Activated CD4-positive, alpha-beta T cell treated with anti-CD3 and anti-CD28 coated beads for 36 hours (primary cell): ENCODE measurements at regions of chr5 and their contacts with region 1.

Region 1: DNA sequence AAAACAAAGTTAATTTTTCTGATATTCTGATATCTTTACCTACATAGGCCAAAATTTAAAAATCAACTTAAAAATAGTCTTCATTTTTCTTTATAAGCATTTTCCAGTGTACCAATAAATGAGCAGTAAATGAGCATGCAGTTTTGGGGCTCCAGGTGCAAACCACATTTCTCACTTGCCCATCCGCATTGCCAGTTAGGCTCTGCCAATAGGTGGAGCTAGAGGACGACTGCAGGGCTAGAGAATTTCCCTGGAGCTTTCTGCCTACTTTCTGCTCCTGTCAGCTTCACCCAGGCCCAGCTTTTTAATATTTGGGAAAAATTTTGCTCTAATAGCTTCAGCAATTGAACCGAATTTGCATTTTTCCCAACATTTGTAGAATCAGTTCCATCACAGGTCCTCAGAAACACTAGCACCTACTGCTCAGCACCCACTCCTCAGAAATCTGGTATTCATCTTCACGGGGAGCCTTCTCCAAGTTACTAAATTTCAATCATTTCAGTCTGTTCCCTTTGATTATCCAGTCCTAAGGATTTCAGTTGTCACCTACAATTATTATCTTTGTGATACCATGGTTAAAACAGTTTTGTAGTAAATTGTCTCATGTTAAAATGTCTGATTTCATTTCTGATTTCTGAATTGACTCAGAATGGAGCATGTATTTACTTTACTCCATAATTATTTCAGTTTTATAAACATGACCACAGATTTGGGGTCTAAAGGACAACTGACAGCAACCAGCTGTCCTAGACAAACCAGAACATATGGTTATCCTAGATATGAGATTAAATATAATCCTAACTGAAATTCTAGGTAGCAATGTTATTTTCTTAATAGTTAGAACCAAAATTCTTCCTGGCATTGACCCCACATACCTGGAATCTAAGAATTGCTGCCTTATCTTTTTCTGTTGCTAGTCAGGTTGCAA is 104.6 kb upstream of the FAM174A start:
- DNase-seq: peak; percentile 65
- ATAC-seq: peak; percentile 39
- H3K4me3 Mint-ChIP-seq: no peak overlapping the region
- H3K27ac Mint-ChIP-seq: no peak overlapping the region
- H3K4me1 Mint-ChIP-seq: no peaks in the 10 kb centered on the region
- H3K27me3 Mint-ChIP-seq: no peaks in the 10 kb centered on the region

Region 2: DNA sequence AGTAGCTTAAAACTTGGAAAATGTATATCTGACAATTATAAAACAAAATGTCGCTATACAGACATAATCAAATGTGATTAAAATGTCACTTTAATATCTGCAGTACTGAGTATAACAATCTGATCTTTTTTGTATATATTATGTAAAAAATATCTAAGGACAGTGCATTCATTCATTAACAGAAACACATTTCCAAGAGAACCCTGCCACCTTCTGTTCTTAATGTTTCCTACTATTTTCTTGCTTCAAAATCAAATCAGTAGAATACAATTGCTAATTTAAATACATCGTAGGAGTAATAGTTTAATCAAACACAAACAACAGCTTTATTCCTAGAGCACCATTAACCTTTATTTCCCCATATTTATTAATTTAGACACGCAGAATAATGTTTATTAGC is 615.2 kb after region 1 on chr5:
- CTCF ChIA-PET with region 1: no interaction called
- POLR2A ChIA-PET with region 1: no interaction called
- intact Hi-C with region 1: loop called in 1 of 2 experiments (anchors 2 kb)
- DNase-seq: no peak
- ATAC-seq: no peak
- H3K4me3 Mint-ChIP-seq: no peak overlapping the region
- H3K27ac Mint-ChIP-seq: no peak overlapping the region
- H3K4me1 Mint-ChIP-seq: peaks cover 9% of the 10 kb centered on the region
- H3K27me3 Mint-ChIP-seq: no peaks in the 10 kb centered on the region

Region 3: DNA sequence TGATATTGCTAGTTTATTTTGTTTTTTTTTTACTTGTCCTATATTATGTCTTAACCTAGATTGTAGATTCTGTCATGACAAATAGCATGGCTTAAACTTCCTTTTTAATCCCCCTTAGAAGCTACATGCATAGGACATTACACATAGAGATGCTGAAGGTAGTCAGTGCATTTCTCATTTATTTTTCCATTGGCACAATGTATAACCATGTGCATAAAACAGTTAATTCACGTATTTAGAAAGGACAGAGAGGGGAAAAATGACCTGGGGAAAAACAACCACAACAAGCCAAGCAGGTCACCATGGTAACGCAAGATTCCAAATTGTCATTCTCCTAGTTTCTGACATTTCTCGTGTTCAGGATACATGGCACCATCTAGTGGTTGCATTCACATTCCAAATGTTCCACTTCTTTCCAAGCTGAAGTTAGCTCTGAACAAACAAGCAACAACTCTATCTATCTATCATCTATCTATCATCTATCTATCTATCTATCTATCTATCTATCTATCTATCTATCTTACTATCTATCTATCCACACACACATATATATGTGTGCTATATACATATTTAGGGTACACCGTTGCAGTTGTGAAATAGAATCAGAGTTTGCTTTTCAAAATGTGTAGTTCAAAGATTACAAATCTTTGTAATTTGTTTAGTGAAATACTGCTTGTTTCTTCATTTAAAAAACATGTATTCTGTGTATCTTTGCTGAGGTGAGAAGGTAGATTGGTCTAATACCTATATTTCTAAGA is 959.8 kb after region 1 on chr5:
- CTCF ChIA-PET with region 1: interaction called, 5 read pairs
- POLR2A ChIA-PET with region 1: no interaction called
- intact Hi-C with region 1: loop called (anchors 1 to 2 kb)
- DNase-seq: peak; percentile 8
- ATAC-seq: no peak
- H3K4me3 Mint-ChIP-seq: no peak overlapping the region
- H3K27ac Mint-ChIP-seq: no peak overlapping the region
- H3K4me1 Mint-ChIP-seq: no peaks in the 10 kb centered on the region
- H3K27me3 Mint-ChIP-seq: peaks cover 4% of the 10 kb centered on the region

Region 4: DNA sequence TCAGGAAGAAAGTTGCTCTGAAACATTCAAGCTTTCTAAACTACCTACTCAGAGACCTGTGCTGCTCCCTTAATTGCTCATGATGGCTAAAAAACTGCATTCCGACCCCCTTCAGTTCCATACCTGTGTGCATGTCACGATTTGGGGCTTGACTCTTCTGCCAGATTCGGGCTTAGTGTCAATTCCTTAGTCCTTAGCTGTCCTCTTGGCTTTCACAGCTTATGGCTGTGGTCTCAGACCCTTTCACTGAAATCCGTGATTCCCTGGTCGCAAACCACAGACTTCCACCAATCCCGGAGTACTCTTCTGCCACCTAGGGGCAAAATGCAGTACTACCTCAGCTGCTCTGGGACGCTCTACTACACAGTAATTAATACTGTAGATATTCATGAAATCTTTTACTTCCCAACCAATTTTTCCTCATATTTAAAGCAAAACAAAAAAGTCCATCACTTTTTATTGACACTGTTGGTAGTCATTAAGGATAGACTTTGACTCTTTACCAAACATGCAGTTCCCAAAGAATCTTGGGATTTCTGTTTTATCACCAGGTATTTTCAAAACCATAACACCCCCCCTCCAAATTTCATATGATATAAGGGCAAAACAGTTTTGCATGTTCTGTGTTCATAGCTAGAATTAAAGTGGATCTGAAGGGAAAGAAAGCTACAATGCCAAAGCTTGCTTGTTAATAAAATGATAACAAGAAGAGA is 1248.1 kb after region 1 on chr5:
- CTCF ChIA-PET with region 1: no interaction called
- POLR2A ChIA-PET with region 1: no interaction called
- intact Hi-C with region 1: loop called (anchors 2 to 5 kb)
- DNase-seq: peak; percentile 58
- ATAC-seq: no peak
- H3K4me3 Mint-ChIP-seq: no peak overlapping the region
- H3K27ac Mint-ChIP-seq: no peak overlapping the region
- H3K4me1 Mint-ChIP-seq: peaks cover 2% of the 10 kb centered on the region
- H3K27me3 Mint-ChIP-seq: peaks cover 4% of the 10 kb centered on the region

Region 5: GRCh38 chr5:101977729-101978345 is 1547.3 kb after region 1 on chr5:
- CTCF ChIA-PET with region 1: no interaction called
- POLR2A ChIA-PET with region 1: no interaction called
- intact Hi-C with region 1: loop called in 1 of 2 experiments (anchors 10 kb)
- DNase-seq: no peak
- ATAC-seq: no peak
- H3K4me3 Mint-ChIP-seq: no peak overlapping the region
- H3K27ac Mint-ChIP-seq: no peak overlapping the region
- H3K4me1 Mint-ChIP-seq: no peaks in the 10 kb centered on the region
- H3K27me3 Mint-ChIP-seq: peaks cover 3% of the 10 kb centered on the region